PC-9 (cell line): ENCODE measurements at regions of chr5 and their contacts with region 1.

Region 1: DNA sequence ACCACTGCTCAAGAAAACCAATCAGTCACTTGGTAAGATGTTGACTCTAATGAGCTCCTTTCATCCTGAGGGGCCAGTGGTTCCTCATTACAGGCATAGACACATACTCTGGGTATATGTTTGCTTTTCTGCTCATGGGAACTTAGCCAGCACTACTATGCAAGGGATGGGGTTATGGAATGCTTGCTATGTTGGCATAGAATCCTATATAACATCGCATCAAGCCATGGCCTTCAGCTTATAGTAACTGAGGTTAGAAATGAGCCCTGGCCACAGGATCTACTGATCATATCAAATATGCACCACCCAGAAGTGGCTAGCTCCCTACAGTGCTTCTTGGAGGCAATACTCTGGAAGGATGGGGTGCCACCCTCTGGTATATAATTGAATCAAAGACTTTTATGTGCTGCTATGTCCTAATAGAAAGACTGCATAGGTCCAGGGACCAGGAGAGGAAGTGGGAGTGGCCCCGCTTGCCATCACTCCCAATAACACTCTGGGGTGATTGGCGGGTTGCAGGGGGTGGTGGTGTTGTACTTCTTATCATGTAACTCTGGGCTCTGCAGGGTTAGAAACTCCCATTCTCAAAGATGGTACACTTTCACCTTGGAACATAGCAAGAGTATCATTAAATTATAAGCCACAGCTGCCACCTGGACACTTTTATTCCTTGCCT is 70.3 kb downstream of the ZNF366 start:
- DNase-seq: peak in 1 of 2 experiments; percentile 4
- H3K4me3 ChIP-seq: no peak overlapping the region
- H3K27ac ChIP-seq: no peak overlapping the region
- H3K4me1 ChIP-seq: peaks cover 12% of the 10 kb centered on the region
- H3K27me3 ChIP-seq: no peaks in the 10 kb centered on the region
- CTCF ChIP-seq: no peak

Region 2: DNA sequence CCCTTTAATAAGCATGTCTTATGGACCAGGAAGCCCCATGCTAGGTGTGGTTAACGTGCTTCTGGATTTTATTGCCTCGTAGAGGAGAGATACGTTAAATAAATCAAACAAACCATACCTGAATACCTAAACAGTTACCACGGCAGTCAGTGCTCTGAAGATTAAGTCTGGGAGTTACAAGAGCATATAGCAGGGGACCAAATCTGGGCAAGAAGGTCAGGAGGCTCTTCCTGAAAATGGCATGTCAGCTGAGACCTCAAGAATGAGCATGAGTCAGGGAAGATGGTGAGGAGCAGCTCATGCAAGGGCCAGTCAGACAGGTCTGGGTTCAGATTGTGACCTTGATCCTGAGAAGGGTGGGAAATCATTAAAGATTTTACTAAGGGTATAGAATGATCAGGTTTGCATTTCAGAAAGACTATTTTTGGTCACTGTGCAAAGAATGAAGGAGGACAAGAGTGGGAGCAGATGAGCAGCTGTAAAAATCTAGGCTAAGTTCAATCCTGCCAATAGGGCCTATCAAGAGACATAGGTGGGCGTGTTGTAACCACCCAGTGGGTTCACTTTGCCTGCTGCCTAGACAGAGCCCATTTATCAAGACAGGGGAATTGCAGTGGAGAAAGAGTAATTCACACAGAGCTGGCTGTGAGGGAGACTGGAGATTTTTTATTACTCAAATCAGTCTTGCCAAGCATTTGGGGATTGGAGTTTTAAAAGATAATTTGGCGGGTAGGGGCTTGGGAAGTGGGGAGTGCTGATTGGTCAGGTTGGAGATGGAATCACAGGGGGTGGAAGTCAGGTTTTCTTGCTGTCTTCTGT is 75.0 kb after region 1 on chr5:
- CTCF ChIA-PET with region 1: no interaction called
- POLR2A ChIA-PET with region 1: no interaction called
- intact Hi-C with region 1: loop called (anchors 2 kb)
- DNase-seq: peak in 1 of 2 experiments; percentile 22
- H3K4me3 ChIP-seq: no peak overlapping the region
- H3K27ac ChIP-seq: 0 out of 2 replicates have a peak overlapping the region, but pooled peaks have one; percentile 6
- H3K4me1 ChIP-seq: peaks cover 54% of the 10 kb centered on the region
- H3K27me3 ChIP-seq: no peaks in the 10 kb centered on the region
- CTCF ChIP-seq: no peak

Region 3: GRCh38 chr5:72799721-72800120 is 362.8 kb after region 1 on chr5:
- CTCF ChIA-PET with region 1: no interaction called
- POLR2A ChIA-PET with region 1: no interaction called
- intact Hi-C with region 1: no loop called
- DNase-seq: no peak
- H3K4me3 ChIP-seq: no peak overlapping the region
- H3K27ac ChIP-seq: no peak overlapping the region
- H3K4me1 ChIP-seq: no peaks in the 10 kb centered on the region
- H3K27me3 ChIP-seq: no peaks in the 10 kb centered on the region
- CTCF ChIP-seq: no peak